Activated CD4-positive, alpha-beta memory T cell treated with anti-CD3 and anti-CD28 coated beads for 36 hours (primary cell): ENCODE measurements at regions of chr6 and their contacts with region 1.

Region 1: GRCh38 chr6:150632785-150633485 is 33.2 kb downstream of the PLEKHG1 start:
- DNase-seq: peak; percentile 17
- H3K4me3 Mint-ChIP-seq: peak overlapping the region; percentile 71
- H3K27ac Mint-ChIP-seq: peak overlapping the region; percentile 68
- H3K4me1 Mint-ChIP-seq: peaks cover 45% of the 10 kb centered on the region
- H3K27me3 Mint-ChIP-seq: peaks cover 12% of the 10 kb centered on the region

Region 2: DNA sequence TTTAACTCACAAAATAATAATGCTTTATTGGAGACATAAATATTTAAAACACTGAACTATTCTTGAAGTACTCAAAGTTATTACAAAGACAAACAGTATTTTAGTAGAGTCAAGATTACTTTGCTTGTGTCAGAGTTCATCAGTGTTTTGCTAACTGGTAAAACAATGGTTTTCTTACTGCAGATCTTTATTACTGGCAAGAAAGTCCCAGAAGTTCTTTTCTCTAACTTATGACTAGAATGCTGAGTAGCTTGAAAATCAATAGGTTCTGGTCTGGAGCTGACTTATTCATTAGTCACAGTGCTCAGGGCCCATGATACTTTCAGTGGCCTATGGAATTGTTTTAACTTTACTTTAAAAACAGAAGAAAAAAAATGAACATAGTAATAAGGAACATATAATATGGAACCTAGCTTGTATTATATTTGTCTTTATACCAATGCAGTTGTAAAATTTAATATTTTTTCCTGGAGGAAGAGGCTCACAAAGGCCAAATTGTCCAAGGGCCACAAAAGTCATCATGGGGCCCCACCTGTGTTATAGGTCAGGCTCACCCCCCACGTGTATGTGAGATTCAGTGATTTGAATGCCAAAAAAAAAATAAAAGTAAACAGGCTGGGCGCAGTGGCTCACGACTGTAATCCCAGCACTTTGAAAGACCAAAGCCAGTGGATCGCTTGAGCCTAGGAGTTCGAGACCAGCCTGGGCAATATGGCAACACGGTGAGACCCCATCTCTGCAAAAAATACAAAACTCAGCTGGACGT is 20.1 kb after region 1 on chr6:
- CTCF ChIA-PET with region 1: interaction called, 4 read pairs
- POLR2A ChIA-PET with region 1: no interaction called
- intact Hi-C with region 1: loop called (anchors 2 kb)
- DNase-seq: no peak
- H3K4me3 Mint-ChIP-seq: no peak overlapping the region
- H3K27ac Mint-ChIP-seq: no peak overlapping the region
- H3K4me1 Mint-ChIP-seq: no peaks in the 10 kb centered on the region
- H3K27me3 Mint-ChIP-seq: no peaks in the 10 kb centered on the region

Region 3: DNA sequence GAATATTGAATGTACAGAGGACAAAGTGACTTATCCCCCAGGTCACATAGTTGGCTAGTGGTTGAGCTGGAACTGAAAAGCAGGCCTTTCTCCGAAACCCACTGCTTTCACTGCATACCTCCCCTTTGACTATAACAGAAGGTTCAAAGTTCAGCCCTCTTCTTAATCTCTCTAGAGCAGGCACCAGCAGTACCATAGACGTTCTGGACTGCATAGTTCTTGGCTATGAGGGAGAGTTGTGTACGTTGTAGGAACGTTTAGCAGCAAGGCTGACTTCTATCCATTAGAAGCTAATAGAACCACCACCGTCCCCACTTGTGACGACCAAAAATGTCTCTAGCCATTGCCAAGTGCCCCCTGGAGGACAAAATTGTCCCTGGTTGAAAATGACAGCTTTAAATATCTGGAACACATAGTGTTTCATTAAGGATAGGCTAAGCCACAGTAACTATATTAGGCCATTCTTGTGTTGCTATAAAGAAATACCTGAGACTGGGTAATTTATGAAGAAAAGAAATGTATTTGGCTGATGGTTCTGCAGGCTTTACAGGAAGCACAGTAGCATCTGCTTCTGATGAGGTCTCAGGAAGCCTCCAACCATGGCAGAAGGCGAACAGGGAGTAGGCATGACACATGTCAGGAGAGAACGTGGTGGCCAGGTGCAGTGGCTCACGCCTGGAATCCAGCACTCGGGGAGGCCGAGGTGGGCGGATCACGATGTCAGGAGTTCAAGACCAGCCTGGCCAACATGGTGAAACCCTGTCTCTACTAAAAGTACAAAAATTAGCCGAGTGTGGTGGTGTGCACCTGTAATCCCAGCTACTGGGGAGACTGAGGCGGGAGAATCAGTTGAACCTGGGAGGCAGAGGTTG is 108.9 kb after region 1 on chr6:
- CTCF ChIA-PET with region 1: no interaction called
- POLR2A ChIA-PET with region 1: no interaction called
- intact Hi-C with region 1: no loop called
- DNase-seq: peak; percentile 12
- H3K4me3 Mint-ChIP-seq: no peak overlapping the region
- H3K27ac Mint-ChIP-seq: no peak overlapping the region
- H3K4me1 Mint-ChIP-seq: no peaks in the 10 kb centered on the region
- H3K27me3 Mint-ChIP-seq: peaks cover 2% of the 10 kb centered on the region